Caki2 (cell line): ENCODE measurements at regions of chr16 and their contacts with region 1.

Region 1: GRCh38 chr16:4624827-4625559 is 367 bp downstream of the MGRN1 start:
- DNase-seq: no peak

Region 2: GRCh38 chr16:4506450-4506849 is 118.5 kb before region 1 on chr16:
- in situ Hi-C with region 1: loop called (anchors 25 kb)
- DNase-seq: peak; percentile 59

Region 3: DNA sequence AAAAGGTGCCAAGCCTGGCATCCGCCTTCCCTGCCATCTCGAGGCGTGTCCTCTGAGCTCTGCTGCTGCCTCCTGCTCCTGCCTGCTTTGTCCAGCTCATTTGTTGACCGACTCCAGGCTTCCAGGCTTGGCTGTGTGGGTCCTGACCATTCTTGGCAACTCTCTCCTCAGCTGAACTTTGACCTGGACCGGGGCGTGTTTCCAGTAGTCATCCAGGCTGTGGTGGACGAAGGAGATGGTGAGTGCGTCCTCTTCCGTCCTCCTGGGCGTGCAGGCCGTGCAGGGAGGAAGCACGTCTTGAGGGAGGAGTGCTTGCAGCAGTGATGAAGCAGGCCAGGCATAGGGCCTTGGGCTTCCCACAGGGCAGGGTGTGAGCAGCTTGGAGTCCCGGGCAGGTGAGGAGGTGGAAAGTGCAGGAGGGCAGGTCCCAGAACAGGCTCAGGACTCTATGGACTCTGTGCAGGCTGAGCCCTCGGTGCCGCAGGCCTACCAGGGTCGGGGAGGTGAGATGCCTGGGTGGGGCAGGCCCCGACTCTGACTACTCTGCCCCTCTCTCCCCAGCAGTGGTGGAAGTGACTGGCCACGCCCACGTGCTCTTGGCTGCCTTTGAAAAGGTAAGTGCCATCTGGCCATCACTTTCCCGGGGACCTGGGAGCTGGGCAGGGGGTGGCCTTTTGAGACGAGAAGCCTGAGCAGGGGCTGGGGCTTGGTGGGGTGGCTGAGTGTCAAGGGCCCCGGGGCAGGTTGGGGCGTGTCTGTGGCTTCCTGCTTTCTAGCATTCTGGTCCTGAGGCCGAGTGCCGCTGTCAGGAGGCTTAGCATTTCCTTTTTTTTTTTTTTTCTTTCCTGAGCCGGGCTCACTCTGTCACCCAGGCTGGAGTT is 39.8 kb after region 1 on chr16:
- in situ Hi-C with region 1: no loop called
- DNase-seq: no peak

Region 4: DNA sequence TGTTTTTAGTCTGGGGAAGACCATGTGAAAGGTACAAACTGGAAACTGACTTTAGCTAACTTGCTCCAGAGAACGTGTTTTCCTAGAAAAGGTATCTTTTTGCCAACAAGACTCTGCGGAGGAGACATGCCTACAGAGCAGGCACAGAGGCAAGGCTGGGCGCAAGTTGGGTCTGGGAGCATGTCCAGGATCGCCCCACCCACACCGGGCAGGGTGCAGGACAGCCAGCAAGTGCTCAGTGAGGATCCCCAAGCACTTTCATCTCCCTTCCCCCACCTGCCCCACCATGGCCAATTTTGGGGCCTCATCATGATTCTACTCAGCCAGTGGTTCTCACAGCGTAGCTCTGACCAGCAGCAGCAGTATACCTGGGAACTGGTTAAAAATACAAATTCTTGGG is 195.7 kb after region 1 on chr16:
- in situ Hi-C with region 1: no loop called
- DNase-seq: no peak